ENCODE measurements at regions of chr18 and their contacts with region 1.

Region 1: GRCh38 chr18:79982734-79983133 is 5.6 kb downstream of the TXNL4A start:
- DNase-seq: peak; percentile 53
- H3K4me3 Mint-ChIP-seq: no peak overlapping the region
- H3K27ac Mint-ChIP-seq: peak overlapping the region; percentile 44
- H3K4me1 Mint-ChIP-seq: peaks cover 76% of the 10 kb centered on the region
- H3K27me3 Mint-ChIP-seq: no peaks in the 10 kb centered on the region

Region 2: GRCh38 chr18:79964330-79965118 is 18.2 kb before region 1 on chr18 and contains the start of gene HSBP1L1:
- CTCF ChIA-PET with region 1: interaction called, 7 read pairs
- POLR2A ChIA-PET with region 1: interaction called, 17 read pairs
- DNase-seq: peak; percentile 68
- H3K4me3 Mint-ChIP-seq: peak within 1 kb of the TSS; percentile 69
- H3K27ac Mint-ChIP-seq: peak within 1 kb of the TSS; percentile 76
- H3K4me1 Mint-ChIP-seq: peaks cover 50% of the 10 kb centered on the region
- H3K27me3 Mint-ChIP-seq: peaks cover 6% of the 10 kb centered on the region
- total RNA-seq, gene HSBP1L1: 9.0 to 9.2 TPM

Region 3: GRCh38 chr18:80000877-80001276 is 18.1 kb after region 1 on chr18:
- CTCF ChIA-PET with region 1: no interaction called
- POLR2A ChIA-PET with region 1: no interaction called
- DNase-seq: no peak
- H3K4me3 Mint-ChIP-seq: no peak overlapping the region
- H3K27ac Mint-ChIP-seq: no peak overlapping the region
- H3K4me1 Mint-ChIP-seq: no peaks in the 10 kb centered on the region
- H3K27me3 Mint-ChIP-seq: no peaks in the 10 kb centered on the region

Region 4: DNA sequence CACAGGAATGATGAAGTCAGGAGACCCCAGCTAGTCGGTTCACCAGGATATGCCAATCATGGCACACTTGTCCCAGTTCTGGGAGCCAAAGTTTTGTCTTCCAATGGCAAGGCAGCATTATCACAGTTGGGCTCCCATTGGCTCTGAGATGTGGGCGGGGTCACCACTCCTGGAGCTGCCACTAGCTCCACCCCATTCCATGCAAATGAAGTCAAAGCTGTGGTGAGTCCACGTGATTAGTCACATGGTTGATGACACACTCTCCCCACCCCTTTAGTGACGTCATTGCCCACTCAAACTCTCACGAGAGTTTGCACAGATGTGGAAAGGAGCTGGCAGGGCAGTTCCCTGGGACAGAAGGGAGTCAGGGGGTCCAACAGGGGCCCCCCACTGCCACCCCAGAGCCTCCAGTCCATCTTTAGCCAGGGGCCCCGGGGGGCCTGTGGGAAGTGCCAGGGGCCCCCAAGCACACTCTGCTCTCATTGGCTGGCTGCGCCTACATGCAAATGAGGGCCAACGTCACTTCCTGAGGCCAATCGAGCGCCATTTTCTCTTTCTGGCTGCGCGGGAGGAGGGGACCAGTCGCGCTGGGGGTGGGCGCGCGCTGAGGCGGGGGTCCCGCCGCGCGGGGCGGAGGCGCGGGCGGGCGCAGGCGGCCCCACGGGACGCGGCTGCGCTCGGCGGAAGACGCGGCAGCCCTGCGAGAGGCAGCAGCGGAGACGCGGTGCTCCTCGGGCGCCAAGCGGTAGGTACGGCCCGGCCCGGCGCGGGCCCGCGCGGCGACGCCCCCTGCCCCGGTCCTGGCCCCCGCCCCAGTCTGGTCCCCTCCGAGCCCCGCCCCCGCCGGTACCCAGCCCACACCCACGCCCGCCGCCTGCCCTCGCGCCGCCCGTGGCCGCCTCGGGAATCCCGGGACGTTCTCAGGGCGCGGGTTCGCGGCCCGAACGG is 126.3 kb after region 1 on chr18 and contains the start of gene ADNP2:
- CTCF ChIA-PET with region 1: no interaction called
- POLR2A ChIA-PET with region 1: interaction called, 20 read pairs
- DNase-seq: peak; percentile 88
- H3K4me3 Mint-ChIP-seq: peak within 1 kb of the TSS; percentile 80
- H3K27ac Mint-ChIP-seq: peak within 1 kb of the TSS; percentile 79
- H3K4me1 Mint-ChIP-seq: peaks cover 32% of the 10 kb centered on the region
- H3K27me3 Mint-ChIP-seq: no peaks in the 10 kb centered on the region
- total RNA-seq, gene ADNP2: 25.8 to 26.6 TPM